ENCODE measurements at regions of chr1 and their contacts with region 1.

Region 1: DNA sequence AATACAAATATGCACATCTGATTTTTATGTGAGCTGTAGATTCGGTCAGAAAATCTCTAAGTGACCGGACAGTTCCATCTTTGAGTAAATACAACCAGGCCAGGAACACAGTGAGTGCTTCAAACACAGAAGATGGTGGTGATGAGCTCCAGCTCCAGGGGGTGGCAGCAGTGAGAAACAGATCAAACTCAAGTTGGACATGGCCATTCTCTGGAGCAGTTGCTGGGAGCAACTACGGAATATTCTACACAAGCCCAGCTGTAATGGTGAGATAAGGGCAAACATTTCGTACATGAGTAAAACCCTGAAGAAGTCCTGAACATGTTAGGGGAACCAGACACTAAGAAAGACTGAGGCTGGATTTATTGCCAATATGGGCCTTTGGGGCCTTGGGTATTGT is 100.7 kb downstream of the BARHL2 start:
- DNase-seq: peak; percentile 22 to 72 (median 38)
- ATAC-seq: peak; percentile 93
- H3K4me3 ChIP-seq: no peak overlapping the region
- H3K27ac ChIP-seq: no peak overlapping the region
- H3K4me1 ChIP-seq: no peaks in the 10 kb centered on the region
- H3K27me3 ChIP-seq: no peaks in the 10 kb centered on the region
- CTCF ChIP-seq: peak; percentile 62 to 69 (median 62)
- EP300 ChIP-seq: no peak
- POLR2A ChIP-seq: no peak
- RAD21 ChIP-seq: peak; percentile 41 to 66; a peak in 3 of 4 replicates

Region 2: GRCh38 chr1:90534663-90535295 is 81.6 kb before region 1 on chr1:
- CTCF ChIA-PET with region 1: no interaction called
- POLR2A ChIA-PET with region 1: no interaction called
- in situ Hi-C with region 1: no loop called
- intact Hi-C with region 1: no loop called
- DNase-seq: no peak
- ATAC-seq: no peak
- H3K4me3 ChIP-seq: no peak overlapping the region
- H3K27ac ChIP-seq: no peak overlapping the region
- H3K4me1 ChIP-seq: no peaks in the 10 kb centered on the region
- H3K27me3 ChIP-seq: no peaks in the 10 kb centered on the region
- CTCF ChIP-seq: no peak
- EP300 ChIP-seq: no peak
- POLR2A ChIP-seq: no peak
- RAD21 ChIP-seq: no peak

Region 3: GRCh38 chr1:90550626-90551406 is 65.6 kb before region 1 on chr1:
- CTCF ChIA-PET with region 1: no interaction called
- POLR2A ChIA-PET with region 1: no interaction called
- in situ Hi-C with region 1: no loop called
- intact Hi-C with region 1: no loop called
- DNase-seq: no peak
- ATAC-seq: no peak
- H3K4me3 ChIP-seq: no peak overlapping the region
- H3K27ac ChIP-seq: no peak overlapping the region
- H3K4me1 ChIP-seq: no peaks in the 10 kb centered on the region
- H3K27me3 ChIP-seq: no peaks in the 10 kb centered on the region
- CTCF ChIP-seq: peak in 1 of 3 experiments; percentile 15; a peak in 1 of 6 replicates
- EP300 ChIP-seq: no peak
- POLR2A ChIP-seq: no peak
- RAD21 ChIP-seq: no peak

Region 4: DNA sequence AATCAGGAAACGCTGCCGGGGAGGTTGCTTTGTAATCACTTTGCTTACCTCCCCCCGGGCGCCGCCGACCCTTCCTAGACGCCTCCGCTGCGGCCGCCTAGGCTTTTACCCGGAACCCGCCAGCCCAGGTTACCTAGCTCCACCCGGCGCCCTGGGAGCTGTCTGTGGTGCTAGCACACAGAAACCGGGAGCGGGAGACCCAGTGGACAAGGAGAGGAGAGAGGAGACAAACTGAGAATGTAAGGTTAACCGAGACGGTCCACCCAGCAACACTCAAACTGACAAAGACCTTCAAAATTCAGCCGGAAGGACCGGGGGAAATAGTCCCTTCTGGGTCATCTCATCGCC is 90.9 kb after region 1 on chr1:
- CTCF ChIA-PET with region 1: interaction called, 4 read pairs
- POLR2A ChIA-PET with region 1: no interaction called
- in situ Hi-C with region 1: no loop called
- intact Hi-C with region 1: loop called (anchors 5 kb)
- DNase-seq: peak in 3 of 4 experiments; percentile 23 to 58 (median 46)
- ATAC-seq: peak; percentile 80
- H3K4me3 ChIP-seq: no peak overlapping the region; the same call in 1 of the 2 replicates
- H3K27ac ChIP-seq: no peak overlapping the region
- H3K4me1 ChIP-seq: peaks cover 0 to 22% of the 10 kb centered on the region in 2 experiments; a peak in 2 of 5 replicates
- H3K27me3 ChIP-seq: peaks cover 50 to 56% of the 10 kb centered on the region in 2 experiments
- CTCF ChIP-seq: no peak
- EP300 ChIP-seq: no peak
- POLR2A ChIP-seq: no peak
- RAD21 ChIP-seq: no peak

Region 5: DNA sequence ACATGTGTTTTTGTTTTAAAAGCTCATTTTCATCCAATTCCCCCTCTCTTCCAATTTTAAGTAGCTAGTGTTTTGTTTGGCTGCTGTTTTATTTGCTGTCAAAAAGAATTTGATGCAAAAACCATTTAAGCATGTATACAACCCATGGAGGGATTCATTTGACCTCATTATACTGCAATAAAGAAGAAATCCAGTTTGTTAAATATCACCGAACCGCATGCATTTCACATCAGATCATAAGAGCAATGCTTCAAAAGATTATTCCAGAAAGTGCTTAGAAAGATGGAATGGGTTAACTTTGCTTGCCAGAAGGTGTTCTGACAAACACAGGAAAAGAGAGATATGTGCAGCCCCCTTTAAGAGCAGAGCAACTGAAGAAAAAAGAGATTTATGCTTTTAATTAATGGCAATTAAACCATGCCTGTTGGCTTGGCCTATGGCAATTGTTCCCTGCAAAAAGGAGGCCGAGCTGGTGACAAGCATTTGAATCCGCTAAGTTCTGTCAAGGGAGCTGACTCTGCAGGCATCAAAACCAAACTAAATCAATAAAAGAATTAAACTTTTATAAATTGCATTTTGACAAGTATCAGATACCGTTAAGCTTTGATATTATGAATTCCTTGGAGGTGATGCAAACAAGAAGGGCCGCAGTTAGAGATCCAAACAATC is 115.1 kb after region 1 on chr1:
- CTCF ChIA-PET with region 1: no interaction called
- POLR2A ChIA-PET with region 1: no interaction called
- in situ Hi-C with region 1: no loop called
- intact Hi-C with region 1: no loop called
- DNase-seq: no peak
- ATAC-seq: no peak
- H3K4me3 ChIP-seq: no peak overlapping the region
- H3K27ac ChIP-seq: no peak overlapping the region
- H3K4me1 ChIP-seq: peaks cover 6 to 11% of the 10 kb centered on the region in 2 experiments; a peak in 4 of 5 replicates
- H3K27me3 ChIP-seq: peaks cover 0 to 2% of the 10 kb centered on the region in 2 experiments; a peak in 2 of 5 replicates
- CTCF ChIP-seq: no peak
- EP300 ChIP-seq: no peak
- POLR2A ChIP-seq: no peak
- RAD21 ChIP-seq: no peak

Region 6: DNA sequence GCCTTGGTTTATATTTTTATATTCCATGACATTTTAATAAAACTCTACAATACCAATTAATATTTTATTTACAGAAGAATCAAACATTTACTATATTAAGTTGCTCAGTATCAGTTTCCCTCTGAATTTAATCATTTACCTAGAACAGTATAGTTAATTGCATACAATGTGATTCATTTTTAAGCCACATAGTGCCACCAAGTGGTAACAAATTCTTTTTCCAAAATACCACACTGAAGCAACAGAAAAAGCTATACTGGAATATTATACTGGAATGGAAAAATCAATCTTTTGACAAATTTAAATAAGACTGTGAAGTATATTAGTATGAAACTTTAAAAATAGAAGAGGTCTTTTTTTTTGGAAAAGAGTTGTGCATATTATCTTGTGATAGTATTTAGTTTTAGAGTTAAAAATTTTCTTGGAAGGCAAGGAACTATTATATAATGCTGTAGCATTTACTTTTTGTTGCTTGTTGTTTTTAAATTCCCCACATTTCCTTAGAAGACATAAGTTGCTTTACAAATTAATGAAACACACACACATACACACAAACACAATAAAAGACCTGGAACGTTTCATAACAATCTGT is 348.1 kb after region 1 on chr1:
- CTCF ChIA-PET with region 1: no interaction called
- POLR2A ChIA-PET with region 1: interaction called, 3 read pairs
- in situ Hi-C with region 1: no loop called
- intact Hi-C with region 1: loop called (anchors 5 kb)
- DNase-seq: peak in 1 of 4 experiments; percentile 39
- ATAC-seq: peak; percentile 85
- H3K4me3 ChIP-seq: no peak overlapping the region
- H3K27ac ChIP-seq: no peak overlapping the region
- H3K4me1 ChIP-seq: no peaks in the 10 kb centered on the region
- H3K27me3 ChIP-seq: no peaks in the 10 kb centered on the region
- CTCF ChIP-seq: peak in 2 of 3 experiments; percentile 32 to 64; a peak in 3 of 6 replicates
- EP300 ChIP-seq: no peak
- POLR2A ChIP-seq: no peak
- RAD21 ChIP-seq: peak; percentile 75 to 79